ENCODE measurements at regions of chr11 and their contacts with region 1.

Region 1: DNA sequence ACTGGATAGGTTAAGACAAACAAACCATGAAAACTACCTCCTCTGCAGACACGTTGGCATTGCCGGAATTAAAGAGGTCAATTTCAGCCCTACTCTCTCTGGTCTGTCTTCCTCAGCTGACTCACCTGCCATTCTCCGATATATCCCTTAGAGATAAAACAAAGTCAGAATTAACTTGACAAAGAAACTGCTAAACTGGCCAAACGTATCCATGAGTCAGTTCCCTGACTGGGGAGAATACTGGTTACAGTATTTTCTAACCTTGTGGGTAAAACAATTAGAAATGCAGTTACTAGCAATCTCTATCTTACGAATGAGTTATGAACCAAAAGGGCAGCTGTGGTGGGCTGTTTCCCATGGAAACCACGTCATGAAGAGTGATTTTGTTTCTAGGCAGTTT is 96.2 kb downstream of the RDX start:
- DNase-seq: no peak
- H3K4me3 ChIP-seq: no peak overlapping the region
- H3K27ac ChIP-seq: no peak overlapping the region
- H3K4me1 ChIP-seq: peaks cover 0 to 5% (median 1%) of the 10 kb centered on the region in 4 donors
- H3K27me3 ChIP-seq: no peaks in the 10 kb centered on the region
- CTCF ChIP-seq: no peak
- EP300 ChIP-seq: no peak
- POLR2A ChIP-seq: no peak

Region 2: GRCh38 chr11:109993786-109994185 is 206.5 kb before region 1 on chr11:
- intact Hi-C with region 1: no loop called
- DNase-seq: no peak
- H3K4me3 ChIP-seq: no peak overlapping the region
- H3K27ac ChIP-seq: no peak overlapping the region
- H3K4me1 ChIP-seq: no peaks in the 10 kb centered on the region
- H3K27me3 ChIP-seq: no peaks in the 10 kb centered on the region
- CTCF ChIP-seq: no peak
- EP300 ChIP-seq: no peak
- POLR2A ChIP-seq: no peak

Region 3: DNA sequence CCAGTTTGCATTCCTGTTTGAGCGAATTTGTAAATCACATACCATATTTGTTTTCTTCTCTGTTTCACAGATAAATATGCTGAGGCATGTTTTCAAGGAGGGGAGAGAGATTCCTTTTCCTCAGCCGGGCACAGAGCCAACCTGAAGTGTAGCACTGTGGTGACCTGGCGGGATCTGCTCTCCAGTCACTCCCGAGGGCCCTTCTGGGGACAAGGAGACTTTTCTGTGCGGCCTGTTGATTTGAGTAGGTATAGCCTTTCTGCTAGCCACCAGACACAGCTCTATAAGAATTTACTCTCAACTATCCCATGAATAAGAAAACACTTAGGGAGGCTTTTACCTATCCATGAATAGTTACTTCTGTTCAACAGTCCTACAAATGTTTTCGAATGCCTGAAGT is 166.1 kb after region 1 on chr11:
- intact Hi-C with region 1: loop called (anchors 5 kb)
- DNase-seq: peak; percentile 73 to 74
- H3K4me3 ChIP-seq: no peak overlapping the region
- H3K27ac ChIP-seq: peak overlapping the region in 1 of 5 donors; percentile 48
- H3K4me1 ChIP-seq: peaks cover 6 to 26% (median 16%) of the 10 kb centered on the region in 4 donors
- H3K27me3 ChIP-seq: no peaks in the 10 kb centered on the region
- CTCF ChIP-seq: no peak
- EP300 ChIP-seq: no peak
- POLR2A ChIP-seq: no peak

Region 4: DNA sequence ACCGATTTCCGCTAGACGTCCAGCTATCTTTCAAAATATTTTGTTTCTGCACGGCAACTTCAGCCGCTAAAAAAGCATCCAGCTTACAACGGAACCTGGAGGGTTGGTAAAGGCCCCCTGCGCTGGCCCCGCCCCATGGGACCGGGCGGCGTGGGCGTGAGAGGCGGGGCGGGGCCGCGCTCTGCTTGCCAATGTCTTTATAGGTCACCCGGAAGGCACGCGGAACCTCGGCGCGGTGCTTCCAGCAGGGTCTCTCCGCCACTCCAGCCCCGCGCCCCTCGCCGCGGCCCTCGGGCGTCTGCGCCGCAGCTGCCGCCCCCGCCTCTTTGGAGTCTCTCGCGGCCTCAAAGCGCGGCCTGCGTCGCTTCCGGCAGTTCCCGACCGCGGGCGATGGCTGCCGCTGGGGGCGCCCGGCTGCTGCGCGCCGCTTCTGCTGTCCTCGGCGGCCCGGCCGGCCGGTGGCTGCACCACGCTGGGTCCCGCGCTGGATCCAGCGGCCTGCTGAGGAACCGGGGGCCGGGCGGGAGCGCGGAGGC is 229.6 kb after region 1 on chr11 and contains the start of gene FDX1:
- intact Hi-C with region 1: loop called (anchors 10 kb)
- DNase-seq: peak; percentile 83 to 95
- H3K4me3 ChIP-seq: peak within 1 kb of the TSS; percentile 75 to 90 (median 79)
- H3K27ac ChIP-seq: peak within 1 kb of the TSS; percentile 94 to 100 (median 97)
- H3K4me1 ChIP-seq: peaks cover 20 to 47% (median 36%) of the 10 kb centered on the region in 4 donors
- H3K27me3 ChIP-seq: no peaks in the 10 kb centered on the region
- CTCF ChIP-seq: peak in 3 of 7 experiments; percentile 51 to 78 (median 58)
- EP300 ChIP-seq: no peak
- POLR2A ChIP-seq: no peak
- total RNA-seq, gene FDX1: 0.58 to 78.8 (median 23.5) TPM

Measured in stomach (tissue), 19 donors.